ENCODE measurements at regions of chr12 and their contacts with region 1.

Region 1: GRCh38 chr12:24584032-24584675 is 364.7 kb downstream of the BCAT1 start:
- DNase-seq: no peak
- H3K4me3 ChIP-seq: no peak overlapping the region
- H3K27ac ChIP-seq: no peak overlapping the region
- H3K4me1 ChIP-seq: no peaks in the 10 kb centered on the region
- H3K27me3 ChIP-seq: no peaks in the 10 kb centered on the region
- CTCF ChIP-seq: no peak
- POLR2A ChIP-seq: no peak

Region 2: GRCh38 chr12:24608637-24609285 is 24.6 kb after region 1 on chr12:
- intact Hi-C with region 1: loop called (anchors 1 kb)
- DNase-seq: no peak
- H3K4me3 ChIP-seq: no peak overlapping the region
- H3K27ac ChIP-seq: no peak overlapping the region
- H3K4me1 ChIP-seq: no peaks in the 10 kb centered on the region
- H3K27me3 ChIP-seq: no peaks in the 10 kb centered on the region
- CTCF ChIP-seq: no peak
- POLR2A ChIP-seq: no peak

Region 3: GRCh38 chr12:24728366-24728765 is 144.2 kb after region 1 on chr12:
- intact Hi-C with region 1: no loop called
- DNase-seq: no peak
- H3K4me3 ChIP-seq: no peak overlapping the region
- H3K27ac ChIP-seq: no peak overlapping the region
- H3K4me1 ChIP-seq: no peaks in the 10 kb centered on the region
- H3K27me3 ChIP-seq: no peaks in the 10 kb centered on the region
- CTCF ChIP-seq: peak in 1 of 3 donors; percentile 30
- POLR2A ChIP-seq: no peak